SK-N-SH (cell line): ENCODE measurements at regions of chr1 and their contacts with region 1.

Region 1: GRCh38 chr1:30232288-30232899 is 491.0 kb downstream of the MATN1 start:
- DNase-seq: no peak
- H3K4me3 ChIP-seq: no peak overlapping the region
- H3K27ac ChIP-seq: no peak overlapping the region
- H3K4me1 ChIP-seq: no peaks in the 10 kb centered on the region
- H3K27me3 ChIP-seq: no peaks in the 10 kb centered on the region
- CTCF ChIP-seq: peak; percentile 34
- EP300 ChIP-seq: no peak
- RAD21 ChIP-seq: peak; percentile 60

Region 2: DNA sequence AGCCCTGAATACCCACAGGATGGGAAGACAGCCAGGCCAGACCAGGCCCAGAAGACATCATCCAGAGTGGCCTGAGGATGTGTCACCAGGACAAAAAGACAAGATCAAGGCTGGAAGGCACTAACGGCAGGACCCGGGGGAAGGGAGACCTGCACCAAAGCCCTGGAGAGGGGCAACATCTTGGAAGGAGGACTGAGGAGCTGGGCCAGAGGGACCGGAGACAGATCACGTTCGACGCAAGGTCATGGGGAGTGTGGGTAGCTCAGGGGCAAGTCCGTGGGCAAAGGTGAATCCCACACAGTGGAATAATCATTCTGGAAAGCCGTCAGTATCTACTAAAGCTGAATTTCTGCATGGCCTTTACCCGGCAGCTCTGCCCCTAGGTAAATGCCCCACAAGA is 12.4 kb after region 1 on chr1:
- CTCF ChIA-PET with region 1: interaction called, 12 read pairs
- POLR2A ChIA-PET with region 1: no interaction called
- DNase-seq: no peak
- H3K4me3 ChIP-seq: no peak overlapping the region
- H3K27ac ChIP-seq: no peak overlapping the region
- H3K4me1 ChIP-seq: no peaks in the 10 kb centered on the region; a peak in 2 of 4 replicates
- H3K27me3 ChIP-seq: no peaks in the 10 kb centered on the region
- CTCF ChIP-seq: no peak
- EP300 ChIP-seq: no peak
- RAD21 ChIP-seq: no peak

Region 3: GRCh38 chr1:30250338-30250983 is 18.1 kb after region 1 on chr1:
- CTCF ChIA-PET with region 1: interaction called, 12 read pairs
- POLR2A ChIA-PET with region 1: no interaction called
- DNase-seq: no peak
- H3K4me3 ChIP-seq: no peak overlapping the region
- H3K27ac ChIP-seq: no peak overlapping the region
- H3K4me1 ChIP-seq: no peaks in the 10 kb centered on the region; a peak in 2 of 4 replicates
- H3K27me3 ChIP-seq: no peaks in the 10 kb centered on the region
- CTCF ChIP-seq: no peak
- EP300 ChIP-seq: no peak
- RAD21 ChIP-seq: no peak

Region 4: DNA sequence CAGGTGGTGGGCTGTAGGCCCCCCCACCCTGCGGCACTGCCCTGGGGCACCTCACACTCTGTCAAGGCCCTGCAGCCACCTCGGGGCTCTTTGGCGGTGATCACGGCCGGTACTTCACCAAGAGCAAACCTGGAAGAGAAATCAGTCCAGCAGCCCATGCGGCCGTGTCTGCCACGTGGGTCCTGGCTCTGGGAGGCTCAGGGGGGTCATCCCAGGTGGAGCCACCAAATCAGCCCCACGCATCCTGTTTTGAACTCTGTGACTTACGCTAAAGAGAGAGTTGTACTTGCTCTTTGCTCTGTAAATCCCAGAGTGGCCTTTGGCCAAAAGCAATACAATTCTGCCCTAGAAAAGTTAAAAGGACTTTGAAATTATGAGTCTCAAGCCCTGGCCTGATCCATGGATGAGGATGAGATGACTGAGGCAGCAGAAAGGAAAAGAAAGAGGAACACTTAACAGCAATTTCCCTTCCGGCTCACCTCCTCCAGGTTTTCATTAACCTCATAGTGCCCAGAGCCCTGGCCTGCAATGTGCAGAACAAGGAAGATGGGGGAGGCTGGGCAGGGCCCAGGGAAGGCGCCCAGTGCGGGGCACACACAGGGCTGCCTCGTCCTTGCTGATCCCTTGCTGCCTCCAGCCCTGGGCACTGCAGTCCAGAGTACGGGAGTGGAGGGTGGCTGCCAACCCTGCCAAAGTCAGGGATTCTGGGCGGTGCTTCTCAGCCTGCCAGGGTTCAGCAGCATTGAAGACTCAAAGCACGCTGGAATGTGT is 153.9 kb after region 1 on chr1:
- CTCF ChIA-PET with region 1: no interaction called
- POLR2A ChIA-PET with region 1: no interaction called
- DNase-seq: no peak
- H3K4me3 ChIP-seq: no peak overlapping the region
- H3K27ac ChIP-seq: no peak overlapping the region
- H3K4me1 ChIP-seq: peaks cover 0 to 27% of the 10 kb centered on the region in 2 experiments; a peak in 2 of 4 replicates
- H3K27me3 ChIP-seq: no peaks in the 10 kb centered on the region
- CTCF ChIP-seq: no peak
- EP300 ChIP-seq: no peak
- RAD21 ChIP-seq: no peak